ENCODE measurements at regions of chr20 and their contacts with region 1.

Region 1: GRCh38 chr20:32603046-32603726 is 18.1 kb upstream of the NOL4L start:
- DNase-seq: no peak
- ATAC-seq: no peak
- H3K4me3 ChIP-seq: no peak overlapping the region
- H3K4me3 Mint-ChIP-seq: no peak overlapping the region
- H3K27ac ChIP-seq: no peak overlapping the region
- H3K27ac Mint-ChIP-seq: no peak overlapping the region
- H3K4me1 ChIP-seq: no peaks in the 10 kb centered on the region
- H3K4me1 Mint-ChIP-seq: no peaks in the 10 kb centered on the region
- H3K27me3 ChIP-seq: no peaks in the 10 kb centered on the region
- H3K27me3 Mint-ChIP-seq: no peaks in the 10 kb centered on the region
- CTCF ChIP-seq: no peak

Region 2: DNA sequence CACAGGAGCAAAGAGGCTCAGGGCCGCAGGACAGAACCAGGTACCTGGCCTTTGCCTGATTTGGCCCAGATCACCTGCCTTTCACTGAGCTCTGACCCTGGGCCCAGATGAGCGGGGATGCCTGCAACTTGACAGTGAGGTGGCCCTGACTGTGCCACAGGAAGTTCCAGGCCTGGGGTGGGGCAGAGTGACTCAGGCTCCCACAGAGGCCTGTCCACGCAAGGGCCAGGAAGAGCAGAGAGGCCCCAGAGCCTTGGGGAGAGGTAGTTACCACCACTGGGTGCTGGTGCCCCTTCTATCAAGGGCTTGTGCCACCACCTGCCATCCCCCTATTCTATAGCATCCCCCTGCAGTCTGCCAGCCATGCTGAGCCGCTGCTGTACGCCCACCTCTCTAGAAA is 13.9 kb before region 1 on chr20:
- CTCF ChIA-PET with region 1: no interaction called
- POLR2A ChIA-PET with region 1: no interaction called
- intact Hi-C with region 1: no loop called
- DNase-seq: no peak
- ATAC-seq: no peak
- H3K4me3 ChIP-seq: no peak overlapping the region
- H3K4me3 Mint-ChIP-seq: no peak overlapping the region
- H3K27ac ChIP-seq: no peak overlapping the region
- H3K27ac Mint-ChIP-seq: no peak overlapping the region
- H3K4me1 ChIP-seq: peaks cover 9% of the 10 kb centered on the region
- H3K4me1 Mint-ChIP-seq: peaks cover 18% of the 10 kb centered on the region
- H3K27me3 ChIP-seq: no peaks in the 10 kb centered on the region
- H3K27me3 Mint-ChIP-seq: no peaks in the 10 kb centered on the region
- CTCF ChIP-seq: no peak

Region 3: GRCh38 chr20:32642257-32643046 is 39.3 kb after region 1 on chr20:
- CTCF ChIA-PET with region 1: no interaction called
- POLR2A ChIA-PET with region 1: no interaction called
- intact Hi-C with region 1: loop called in 1 of 2 experiments (anchors 5 kb)
- DNase-seq: no peak
- ATAC-seq: no peak
- H3K4me3 ChIP-seq: no peak overlapping the region
- H3K4me3 Mint-ChIP-seq: no peak overlapping the region
- H3K27ac ChIP-seq: no peak overlapping the region
- H3K27ac Mint-ChIP-seq: no peak overlapping the region
- H3K4me1 ChIP-seq: no peaks in the 10 kb centered on the region
- H3K4me1 Mint-ChIP-seq: no peaks in the 10 kb centered on the region
- H3K27me3 ChIP-seq: no peaks in the 10 kb centered on the region
- H3K27me3 Mint-ChIP-seq: no peaks in the 10 kb centered on the region
- CTCF ChIP-seq: no peak

Measured in CD8-positive, alpha-beta T cell (primary cell).